ENCODE measurements at regions of chr20 and their contacts with region 1.

Region 1: GRCh38 chr20:1466211-1467081 is at the start of gene NSFL1C:
- DNase-seq: peak; percentile 98 to 99
- ATAC-seq: peak; percentile 99
- H3K4me3 ChIP-seq: peak within 1 kb of the TSS; percentile 31 to 96
- H3K27ac ChIP-seq: peak within 1 kb of the TSS; percentile 1 to 23
- H3K4me1 ChIP-seq: peaks cover 0 to 3% of the 10 kb centered on the region in 2 donors
- H3K27me3 ChIP-seq: no peaks in the 10 kb centered on the region
- total RNA-seq, gene NSFL1C: 61.3 to 71.3 TPM

Region 2: GRCh38 chr20:1118336-1119127 is 347.9 kb before region 1 on chr20 and contains the start of gene PSMF1:
- intact Hi-C with region 1: loop called (anchors 2 kb)
- DNase-seq: peak; percentile 97 to 98
- ATAC-seq: peak; percentile 99
- H3K4me3 ChIP-seq: peak within 1 kb of the TSS; percentile 59 to 73
- H3K27ac ChIP-seq: no peak within 1 kb of the TSS
- H3K4me1 ChIP-seq: no peaks in the 10 kb centered on the region
- H3K27me3 ChIP-seq: no peaks in the 10 kb centered on the region
- total RNA-seq, gene PSMF1: 96.9 to 105 TPM

Region 3: DNA sequence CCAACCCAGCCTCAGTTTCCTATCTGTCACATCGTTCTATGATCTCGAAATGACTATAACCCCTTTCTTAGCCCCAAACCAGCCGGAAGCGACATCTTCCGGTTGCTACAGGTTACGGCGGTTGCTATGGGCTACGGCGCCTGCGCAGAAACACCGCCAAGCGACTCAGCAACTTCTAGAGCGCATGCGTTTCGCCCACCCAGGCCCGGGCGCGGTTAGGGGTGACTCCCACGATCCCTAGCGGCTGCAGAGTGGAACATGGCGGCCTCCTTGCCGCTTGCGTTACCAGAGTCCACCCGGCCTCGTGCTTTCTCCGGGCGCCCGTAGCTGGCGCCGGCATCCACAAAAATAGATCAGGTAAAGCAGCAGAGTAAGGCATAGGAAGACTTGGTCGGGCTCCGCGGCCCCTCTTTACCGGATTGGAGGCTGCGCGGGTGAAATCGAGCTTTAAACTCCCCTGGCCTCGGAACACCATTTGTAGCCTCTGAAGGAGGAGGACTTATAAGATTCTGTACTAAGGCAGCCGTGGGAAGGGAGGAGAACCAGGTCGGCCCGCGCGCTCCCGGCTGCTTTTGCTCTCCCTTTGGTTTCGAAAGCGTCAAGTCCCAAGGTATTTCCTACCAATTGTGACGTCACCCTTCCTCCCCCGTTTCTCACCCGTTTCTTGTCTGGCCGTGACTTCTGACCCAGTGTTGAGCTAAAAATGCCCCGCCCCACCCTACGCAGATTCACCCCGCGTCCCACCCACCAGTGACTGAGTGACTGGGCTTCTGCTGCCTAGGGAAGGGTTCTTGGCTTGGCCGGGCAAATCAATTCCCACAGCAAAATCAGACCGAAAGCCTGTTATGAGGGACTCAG is 141.0 kb before region 1 on chr20:
- intact Hi-C with region 1: loop called (anchors 2 to 5 kb)
- DNase-seq: peak; percentile 99 to 100
- ATAC-seq: peak; percentile 97
- H3K4me3 ChIP-seq: peak overlapping the region; percentile 74 to 95
- H3K27ac ChIP-seq: peak overlapping the region; percentile 62 to 94
- H3K4me1 ChIP-seq: no peaks in the 10 kb centered on the region
- H3K27me3 ChIP-seq: no peaks in the 10 kb centered on the region

Region 4: GRCh38 chr20:1423625-1424106 is 42.8 kb before region 1 on chr20:
- intact Hi-C with region 1: no loop called
- DNase-seq: no peak
- ATAC-seq: no peak
- H3K4me3 ChIP-seq: no peak overlapping the region
- H3K27ac ChIP-seq: no peak overlapping the region
- H3K4me1 ChIP-seq: no peaks in the 10 kb centered on the region
- H3K27me3 ChIP-seq: no peaks in the 10 kb centered on the region

Region 5: DNA sequence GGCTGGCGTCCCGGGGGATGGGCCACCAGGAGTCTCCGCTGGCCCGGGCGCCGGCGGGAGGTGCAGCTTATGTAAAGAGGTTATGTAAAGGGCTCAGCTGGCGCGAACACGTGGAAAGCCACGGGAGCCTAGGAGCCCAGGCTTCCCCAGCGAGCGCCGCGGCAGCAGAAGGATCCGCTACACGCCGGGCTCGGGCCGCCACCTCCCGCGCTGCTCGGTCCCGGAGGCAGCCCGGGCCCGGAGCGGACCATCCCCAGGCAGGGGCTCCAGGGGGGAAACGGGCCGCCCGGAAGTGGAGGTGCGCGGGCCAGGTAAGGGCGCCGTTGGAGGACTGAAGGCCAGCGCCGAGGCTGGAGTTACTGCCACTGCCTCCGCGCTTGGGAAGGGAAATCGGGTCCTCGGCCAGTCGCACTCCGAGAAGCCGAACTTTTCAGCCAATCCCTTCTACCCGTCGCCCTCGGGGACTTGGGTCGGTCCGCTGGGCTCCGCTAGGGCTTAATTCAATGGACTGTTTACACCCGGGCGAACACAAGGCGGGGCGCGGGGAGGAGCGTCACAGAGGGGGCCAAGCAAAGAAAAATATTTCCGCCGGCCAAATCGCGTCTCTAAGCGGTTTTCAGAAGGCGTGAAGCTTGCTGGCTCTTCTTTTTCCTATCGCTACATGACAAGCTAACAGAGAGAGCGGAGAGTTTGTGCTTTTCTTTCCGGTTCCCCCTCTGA is 635.6 kb after region 1 on chr20:
- intact Hi-C with region 1: loop called in 1 of 2 experiments (anchors 10 kb)
- DNase-seq: peak; percentile 95 to 97
- ATAC-seq: peak; percentile 97
- H3K4me3 ChIP-seq: peak overlapping the region; percentile 52 to 67
- H3K27ac ChIP-seq: peak overlapping the region; percentile 58 to 92
- H3K4me1 ChIP-seq: peaks cover 2 to 12% of the 10 kb centered on the region in 2 donors
- H3K27me3 ChIP-seq: no peaks in the 10 kb centered on the region